Activated T-helper 2 cell treated with anti-CD3 and anti-CD28 coated beads, Interferon-gamma antibody, Interleukin-2, Interleukin-4, amounts not matched to agents 10 μg/mL and 5 μg/mL and 100 μg/mL, durations not matched to agents 14 hours and 24 hours and 36 hours (primary cell): ENCODE measurements at regions of chr11 and their contacts with region 1.

Region 1: GRCh38 chr11:34274723-34275401 is 82.9 kb downstream of the ABTB2 start:
- DNase-seq: no peak
- H3K4me3 Mint-ChIP-seq: no peak overlapping the region
- H3K27ac Mint-ChIP-seq: no peak overlapping the region
- H3K4me1 Mint-ChIP-seq: peaks cover 12% of the 10 kb centered on the region
- H3K27me3 Mint-ChIP-seq: no peaks in the 10 kb centered on the region

Region 2: DNA sequence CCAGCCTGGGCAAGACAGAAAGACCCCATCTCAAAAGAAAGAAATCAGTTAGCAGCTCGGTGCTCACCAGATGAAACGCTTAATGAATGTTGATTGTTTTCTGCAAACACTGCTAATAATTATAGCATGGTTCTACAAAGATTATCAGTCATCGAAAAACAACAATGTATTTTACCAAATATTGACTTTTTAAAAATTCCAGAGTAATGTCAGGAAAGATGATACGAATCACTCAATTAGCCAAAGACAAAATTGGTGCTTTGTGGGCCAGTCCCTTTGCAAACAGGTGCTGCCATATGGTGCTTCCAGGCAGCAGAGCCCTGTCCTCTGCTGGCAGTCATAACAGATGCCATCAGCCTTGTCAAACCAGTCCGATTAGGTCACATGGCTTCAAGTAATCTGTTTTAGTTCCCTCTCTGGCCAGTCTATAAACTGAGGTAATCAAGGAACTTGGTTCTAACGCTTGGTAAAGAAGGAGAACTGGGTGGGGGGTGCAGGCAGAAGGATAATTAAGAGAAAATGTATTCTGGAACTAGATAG is 272.5 kb before region 1 on chr11:
- intact Hi-C with region 1: no loop called
- DNase-seq: no peak
- H3K4me3 Mint-ChIP-seq: no peak overlapping the region
- H3K27ac Mint-ChIP-seq: no peak overlapping the region
- H3K4me1 Mint-ChIP-seq: peaks cover 5% of the 10 kb centered on the region
- H3K27me3 Mint-ChIP-seq: peaks cover 46% of the 10 kb centered on the region

Region 3: GRCh38 chr11:34339149-34340064 is 64.5 kb after region 1 on chr11:
- intact Hi-C with region 1: loop called (anchors 5 kb)
- DNase-seq: no peak
- H3K4me3 Mint-ChIP-seq: no peak overlapping the region
- H3K27ac Mint-ChIP-seq: no peak overlapping the region
- H3K4me1 Mint-ChIP-seq: peaks cover 29% of the 10 kb centered on the region
- H3K27me3 Mint-ChIP-seq: no peaks in the 10 kb centered on the region